ENCODE measurements at regions of chr15 and their contacts with region 1.

Region 1: GRCh38 chr15:42427429-42428223 is 63.3 kb downstream of the ZNF106 start:
- DNase-seq: no peak
- ATAC-seq: no peak

Region 2: GRCh38 chr15:42159381-42160015 is 268.1 kb before region 1 on chr15:
- intact Hi-C with region 1: loop called (anchors 10 kb)
- DNase-seq: peak; percentile 82
- ATAC-seq: peak; percentile 83

Region 3: GRCh38 chr15:42490291-42490670 is 62.7 kb after region 1 on chr15:
- intact Hi-C with region 1: no loop called
- DNase-seq: no peak
- ATAC-seq: peak; percentile 2

Region 4: DNA sequence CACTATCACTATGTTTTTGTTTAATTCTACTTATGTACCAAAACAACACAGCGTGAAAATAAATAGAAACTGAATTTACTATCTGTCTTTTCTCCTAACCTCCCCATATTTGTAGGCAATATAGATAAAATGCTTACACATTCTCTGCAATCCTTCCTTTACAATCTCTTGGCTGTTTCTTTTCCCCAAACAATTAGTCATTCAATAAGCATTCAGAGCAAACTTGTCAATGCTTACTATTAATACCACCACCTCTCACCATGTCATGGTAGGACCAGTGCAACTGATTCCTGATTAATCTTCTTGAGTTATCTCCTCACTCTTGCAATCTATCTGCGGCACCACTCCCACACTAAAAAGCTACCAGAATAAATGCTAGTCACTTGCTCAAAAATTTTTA is 566.9 kb after region 1 on chr15:
- intact Hi-C with region 1: no loop called
- DNase-seq: no peak
- ATAC-seq: no peak

Measured in Right ventricle myocardium inferior (tissue), 1 donor.